ENCODE measurements at regions of chr3 and their contacts with region 1.

Region 1: GRCh38 chr3:28328188-28329151 is 20.1 kb upstream of the ZCWPW2 start:
- DNase-seq: no peak
- H3K4me3 Mint-ChIP-seq: no peak overlapping the region
- H3K27ac Mint-ChIP-seq: no peak overlapping the region
- H3K4me1 Mint-ChIP-seq: peaks cover 9% of the 10 kb centered on the region
- H3K27me3 Mint-ChIP-seq: no peaks in the 10 kb centered on the region

Region 2: DNA sequence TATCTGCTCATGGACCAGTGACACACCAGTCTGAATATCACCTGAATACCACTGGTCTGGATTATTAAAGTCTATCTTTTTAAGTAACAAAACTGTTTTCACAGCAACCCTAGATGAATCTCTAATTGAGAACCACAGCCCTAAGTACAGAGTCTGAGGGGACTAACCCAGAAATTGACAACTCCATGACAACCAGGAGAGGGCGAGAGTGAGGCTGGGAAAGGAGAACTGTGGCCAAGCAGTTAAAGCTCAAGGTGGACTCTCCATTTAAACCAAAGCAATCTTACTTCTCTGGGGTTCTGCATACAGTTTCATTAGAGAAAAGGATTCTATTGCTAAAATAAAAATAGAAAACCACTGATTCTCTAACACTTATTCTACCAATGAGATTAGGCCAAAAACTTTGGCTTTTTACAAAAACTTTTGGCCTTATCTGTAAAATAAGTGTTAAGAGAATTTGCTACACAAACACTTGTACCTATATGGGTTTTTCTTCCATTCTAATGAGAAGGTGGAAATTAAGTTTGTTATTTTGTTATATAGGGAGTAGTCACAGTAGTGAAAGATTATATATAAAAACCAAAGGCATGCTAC is 970.7 kb before region 1 on chr3:
- CTCF ChIA-PET with region 1: no interaction called
- intact Hi-C with region 1: loop called (anchors 5 kb)
- DNase-seq: peak; percentile 79
- H3K4me3 Mint-ChIP-seq: no peak overlapping the region
- H3K27ac Mint-ChIP-seq: no peak overlapping the region
- H3K4me1 Mint-ChIP-seq: peaks cover 15% of the 10 kb centered on the region
- H3K27me3 Mint-ChIP-seq: no peaks in the 10 kb centered on the region

Region 3: DNA sequence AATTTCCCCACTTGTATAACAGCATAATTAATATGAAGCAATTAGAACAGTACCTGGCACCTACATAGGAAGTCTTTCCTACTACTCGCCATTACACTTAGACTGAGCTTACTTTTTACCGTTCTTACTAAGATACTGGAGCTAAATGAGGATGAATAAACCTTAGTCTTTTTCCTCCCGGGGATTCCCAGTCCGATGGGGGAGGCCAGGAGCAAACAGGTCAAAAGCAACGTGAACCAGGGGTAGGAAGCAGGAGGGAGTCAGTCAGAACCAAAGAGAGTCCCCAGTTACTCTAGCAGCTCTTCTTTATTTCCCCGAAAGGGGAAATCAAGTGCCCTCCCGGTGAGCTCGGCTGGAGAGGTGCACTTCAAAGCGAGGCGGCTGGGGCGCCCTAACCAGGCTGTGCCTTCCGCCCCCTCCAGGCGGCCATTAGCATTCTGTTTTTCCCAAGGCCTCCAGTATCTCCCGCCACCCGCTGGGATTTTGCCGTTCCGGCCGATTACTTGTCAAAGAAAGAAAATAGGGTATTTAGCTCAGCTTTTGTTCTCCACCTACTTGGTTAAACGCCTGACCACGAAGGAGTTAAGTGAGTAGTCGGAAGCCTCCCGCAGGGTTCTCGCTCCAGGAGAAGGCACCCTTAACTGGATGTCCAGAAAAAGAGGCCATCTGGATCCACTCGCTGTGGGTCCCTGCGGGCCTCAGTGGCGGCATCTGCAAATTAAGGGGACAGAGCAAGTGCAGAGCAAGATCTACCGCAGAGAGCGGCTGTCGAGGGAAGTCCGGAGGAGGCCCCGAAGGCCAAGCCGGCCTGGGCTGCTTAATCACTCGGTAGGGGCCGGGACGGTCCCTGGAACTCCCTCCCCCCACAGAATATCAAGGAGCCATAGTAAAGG is 600.0 kb before region 1 on chr3:
- CTCF ChIA-PET with region 1: interaction called, 11 read pairs
- intact Hi-C with region 1: no loop called
- DNase-seq: peak; percentile 39
- H3K4me3 Mint-ChIP-seq: peak overlapping the region; percentile 62
- H3K27ac Mint-ChIP-seq: no peak overlapping the region
- H3K4me1 Mint-ChIP-seq: peaks cover 41% of the 10 kb centered on the region
- H3K27me3 Mint-ChIP-seq: peaks cover 80% of the 10 kb centered on the region

Region 4: DNA sequence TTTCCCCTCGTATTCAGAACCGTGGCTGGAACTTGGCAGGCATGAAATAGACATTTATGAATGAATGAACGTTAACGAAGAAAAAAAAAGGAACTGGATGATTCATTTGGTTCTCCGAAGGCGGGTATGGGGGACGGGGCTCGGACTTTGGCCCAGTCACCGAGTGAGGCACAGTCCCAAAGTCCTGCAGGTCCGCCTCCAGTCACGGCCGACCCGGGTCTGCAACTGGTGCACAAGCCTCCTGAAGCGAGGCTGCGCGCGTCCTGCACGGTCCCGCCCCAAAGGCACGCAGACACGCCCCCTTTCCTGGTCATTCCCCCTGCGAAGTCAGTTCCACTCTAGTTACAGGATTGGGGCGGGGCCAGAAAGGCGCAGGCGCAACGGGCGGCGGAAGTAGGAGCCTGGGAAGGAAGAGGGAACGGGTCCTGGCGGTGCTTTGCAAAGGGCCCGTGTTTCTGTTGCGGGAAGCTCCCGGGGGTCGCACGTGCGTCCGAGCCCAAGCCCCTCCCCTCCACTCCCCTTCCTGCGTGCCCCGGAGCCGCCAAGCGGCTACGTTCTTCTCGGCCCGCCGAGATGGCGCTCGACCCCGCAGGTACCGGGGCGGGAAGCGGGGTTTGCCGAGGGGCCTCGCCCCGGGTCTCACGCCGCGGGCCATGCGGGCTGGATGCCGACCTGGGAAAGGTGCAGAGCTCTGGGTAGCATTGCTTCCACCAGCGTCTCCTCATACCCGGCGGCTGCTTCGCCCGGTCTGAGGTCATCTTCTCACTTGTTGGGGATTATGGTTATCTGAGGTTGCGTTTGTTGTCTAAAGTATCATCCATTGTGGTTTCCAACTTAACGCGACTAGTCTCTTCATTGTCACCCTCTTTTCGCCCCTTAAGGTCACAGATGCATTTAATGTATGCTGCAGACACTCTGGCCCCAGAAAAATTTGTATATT is 87.0 kb before region 1 on chr3 and contains the start of gene CMC1:
- CTCF ChIA-PET with region 1: no interaction called
- intact Hi-C with region 1: loop called (anchors 2 kb)
- DNase-seq: peak; percentile 97
- H3K4me3 Mint-ChIP-seq: peak within 1 kb of the TSS; percentile 88
- H3K27ac Mint-ChIP-seq: peak within 1 kb of the TSS; percentile 90
- H3K4me1 Mint-ChIP-seq: peaks cover 45% of the 10 kb centered on the region
- H3K27me3 Mint-ChIP-seq: no peaks in the 10 kb centered on the region
- total RNA-seq, gene CMC1: 27.6 to 28.6 TPM

Region 5: GRCh38 chr3:28348629-28349483 is 20.4 kb after region 1 on chr3 and contains the starts of genes AZI2 and ZCWPW2:
- CTCF ChIA-PET with region 1: no interaction called
- intact Hi-C with region 1: loop called (anchors 1 kb)
- DNase-seq: peak; percentile 93
- H3K4me3 Mint-ChIP-seq: peak within 1 kb of the TSS; percentile 88
- H3K27ac Mint-ChIP-seq: peak within 1 kb of the TSS; percentile 92
- H3K4me1 Mint-ChIP-seq: peaks cover 36% of the 10 kb centered on the region
- H3K27me3 Mint-ChIP-seq: no peaks in the 10 kb centered on the region
- total RNA-seq, gene AZI2: 31.5 to 39.4 TPM
- total RNA-seq, gene ZCWPW2: 0.17 TPM in 1 of 2 experiments, not detected in the other

Region 6: GRCh38 chr3:28386049-28386448 is 57.6 kb after region 1 on chr3:
- CTCF ChIA-PET with region 1: no interaction called
- intact Hi-C with region 1: no loop called
- DNase-seq: no peak
- H3K4me3 Mint-ChIP-seq: no peak overlapping the region
- H3K27ac Mint-ChIP-seq: no peak overlapping the region
- H3K4me1 Mint-ChIP-seq: no peaks in the 10 kb centered on the region
- H3K27me3 Mint-ChIP-seq: no peaks in the 10 kb centered on the region